H1 (cell line): ENCODE measurements at regions of chr6 and their contacts with region 1.

Region 1: GRCh38 chr6:26156076-26156849 is 69.0 kb downstream of the HFE start:
- DNase-seq: peak; percentile 67 to 95
- H3K4me3 ChIP-seq: peak overlapping the region; percentile 90 to 100 (median 92)
- H3K27ac ChIP-seq: peak overlapping the region; percentile 97
- H3K4me1 ChIP-seq: peaks cover 0 to 3% (median 3%) of the 10 kb centered on the region in 4 experiments; a peak in 5 of 7 replicates
- H3K27me3 ChIP-seq: no peaks in the 10 kb centered on the region
- CTCF ChIP-seq: no peak
- EP300 ChIP-seq: no peak
- POLR2A ChIP-seq: peak; percentile 87 to 97
- RAD21 ChIP-seq: 0 out of 4 replicates have a peak, but pooled peaks have one; percentile 2 to 9

Region 2: DNA sequence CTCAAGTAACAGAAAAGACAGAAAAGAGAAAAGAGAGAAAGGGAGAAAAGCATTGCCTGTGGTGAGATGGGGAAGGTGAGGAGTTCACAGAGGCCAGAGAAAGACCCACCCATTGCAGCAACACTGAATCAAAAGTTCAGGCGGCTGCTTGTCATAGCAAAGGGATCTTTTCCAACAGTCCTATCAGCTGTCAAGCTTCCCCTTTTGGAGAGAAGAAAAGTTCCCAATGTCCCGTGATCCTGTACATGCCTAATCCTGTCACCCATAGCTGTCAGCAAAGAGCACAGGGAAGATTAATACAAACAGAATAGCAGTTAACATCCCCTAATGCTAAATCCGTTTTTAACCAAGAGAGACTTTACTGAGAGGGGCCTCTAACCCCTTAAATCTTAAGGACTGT is 202.5 kb before region 1 on chr6:
- CTCF ChIA-PET with region 1: no interaction called
- POLR2A ChIA-PET with region 1: no interaction called
- DNase-seq: no peak
- H3K4me3 ChIP-seq: no peak overlapping the region
- H3K27ac ChIP-seq: no peak overlapping the region
- H3K4me1 ChIP-seq: peaks cover 0 to 1% (median 0%) of the 10 kb centered on the region in 4 experiments; a peak in 1 of 7 replicates
- H3K27me3 ChIP-seq: no peaks in the 10 kb centered on the region
- CTCF ChIP-seq: no peak
- EP300 ChIP-seq: no peak
- POLR2A ChIP-seq: no peak
- RAD21 ChIP-seq: no peak

Region 3: DNA sequence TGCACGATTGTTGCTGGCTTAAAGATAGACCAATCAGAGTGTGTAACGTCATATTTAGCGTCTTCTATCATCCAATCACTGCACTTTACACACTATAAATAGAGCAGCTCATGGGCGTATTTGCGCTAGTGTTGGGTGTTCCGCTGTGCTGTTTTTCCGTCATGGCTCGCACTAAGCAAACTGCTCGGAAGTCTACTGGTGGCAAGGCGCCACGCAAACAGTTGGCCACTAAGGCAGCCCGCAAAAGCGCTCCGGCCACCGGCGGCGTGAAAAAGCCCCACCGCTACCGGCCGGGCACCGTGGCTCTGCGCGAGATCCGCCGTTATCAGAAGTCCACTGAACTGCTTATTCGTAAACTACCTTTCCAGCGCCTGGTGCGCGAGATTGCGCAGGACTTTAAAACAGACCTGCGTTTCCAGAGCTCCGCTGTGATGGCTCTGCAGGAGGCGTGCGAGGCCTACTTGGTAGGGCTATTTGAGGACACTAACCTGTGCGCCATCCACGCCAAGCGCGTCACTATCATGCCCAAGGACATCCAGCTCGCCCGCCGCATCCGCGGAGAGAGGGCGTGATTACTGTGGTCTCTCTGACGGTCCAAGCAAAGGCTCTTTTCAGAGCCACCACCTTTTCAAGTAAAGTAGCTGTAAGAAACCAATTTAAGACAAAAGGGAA is 135.8 kb before region 1 on chr6:
- CTCF ChIA-PET with region 1: no interaction called
- POLR2A ChIA-PET with region 1: interaction called, 451 read pairs
- DNase-seq: no peak
- H3K4me3 ChIP-seq: peak overlapping the region; percentile 69 to 94 (median 74)
- H3K27ac ChIP-seq: peak overlapping the region; percentile 95
- H3K4me1 ChIP-seq: peaks cover 2 to 14% (median 5%) of the 10 kb centered on the region in 4 experiments; a peak in 4 of 7 replicates
- H3K27me3 ChIP-seq: no peaks in the 10 kb centered on the region
- CTCF ChIP-seq: no peak
- EP300 ChIP-seq: no peak
- POLR2A ChIP-seq: peak; percentile 100
- RAD21 ChIP-seq: no peak; a peak in 1 of 4 replicates

Region 4: GRCh38 chr6:26115226-26115625 is 41.0 kb before region 1 on chr6:
- CTCF ChIA-PET with region 1: no interaction called
- POLR2A ChIA-PET with region 1: interaction called, 36 read pairs
- DNase-seq: no peak
- H3K4me3 ChIP-seq: no peak overlapping the region
- H3K27ac ChIP-seq: no peak overlapping the region
- H3K4me1 ChIP-seq: peaks cover 0 to 2% (median 0%) of the 10 kb centered on the region in 4 experiments; a peak in 2 of 7 replicates
- H3K27me3 ChIP-seq: no peaks in the 10 kb centered on the region
- CTCF ChIP-seq: no peak
- EP300 ChIP-seq: no peak
- POLR2A ChIP-seq: no peak
- RAD21 ChIP-seq: no peak

Region 5: DNA sequence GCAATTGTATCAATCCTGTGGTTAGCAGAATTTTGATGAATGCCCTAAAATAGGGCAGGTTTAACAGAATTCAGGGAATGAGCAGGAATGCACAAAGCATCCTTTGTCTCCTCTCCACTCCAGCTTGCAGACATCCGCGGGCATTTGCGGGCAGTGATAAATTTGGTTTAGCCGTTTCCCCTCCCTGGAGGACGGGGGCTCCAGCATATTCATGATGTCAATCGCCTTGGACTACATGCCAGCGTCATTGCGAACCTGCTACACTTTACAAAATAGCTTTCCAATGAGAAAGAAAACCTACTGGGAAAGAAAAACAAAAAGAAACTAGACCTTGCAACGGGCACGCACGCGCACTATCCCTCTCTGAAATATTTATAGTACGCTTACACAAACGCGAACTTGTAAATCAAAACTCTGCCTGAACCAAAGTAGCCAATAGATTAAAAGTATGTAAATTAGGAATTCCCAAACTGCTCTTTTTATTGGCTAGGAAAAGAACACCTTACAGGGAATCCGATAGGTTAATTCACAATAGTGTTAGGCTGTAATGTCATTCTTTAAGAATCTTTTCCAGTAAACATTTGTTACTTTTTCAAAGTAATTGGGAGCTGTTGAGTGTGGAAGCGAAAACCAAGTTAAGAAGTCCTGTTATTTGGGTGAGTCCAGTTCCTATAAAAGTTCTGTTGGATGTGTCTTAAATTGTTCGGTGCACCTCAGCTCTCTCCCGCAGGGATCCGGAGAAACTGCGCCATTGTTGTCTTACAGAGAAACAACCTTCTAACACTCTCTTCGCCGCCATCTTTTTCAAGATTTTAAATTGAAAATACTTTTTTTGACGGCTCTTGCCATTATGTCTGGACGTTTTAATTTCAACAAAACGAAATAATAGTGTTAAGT is 67.6 kb after region 1 on chr6:
- CTCF ChIA-PET with region 1: interaction called, 3 read pairs
- POLR2A ChIA-PET with region 1: interaction called, 2,060 read pairs
- DNase-seq: no peak
- H3K4me3 ChIP-seq: peak overlapping the region; percentile 61 to 94 (median 76)
- H3K27ac ChIP-seq: peak overlapping the region; percentile 91
- H3K4me1 ChIP-seq: peaks cover 0 to 7% (median 3%) of the 10 kb centered on the region in 4 experiments; a peak in 5 of 7 replicates
- H3K27me3 ChIP-seq: no peaks in the 10 kb centered on the region
- CTCF ChIP-seq: no peak
- EP300 ChIP-seq: no peak
- POLR2A ChIP-seq: peak; percentile 48 to 76; a peak in 2 of 3 replicates
- RAD21 ChIP-seq: no peak

Region 6: GRCh38 chr6:26270903-26271667 is 114.8 kb after region 1 on chr6:
- CTCF ChIA-PET with region 1: no interaction called
- POLR2A ChIA-PET with region 1: interaction called, 225 read pairs
- DNase-seq: peak in 1 of 2 experiments; percentile 85
- H3K4me3 ChIP-seq: peak overlapping the region; percentile 73 to 97 (median 88)
- H3K27ac ChIP-seq: peak overlapping the region; percentile 93
- H3K4me1 ChIP-seq: peaks cover 0 to 10% (median 4%) of the 10 kb centered on the region in 4 experiments; a peak in 4 of 7 replicates
- H3K27me3 ChIP-seq: no peaks in the 10 kb centered on the region
- CTCF ChIP-seq: no peak
- EP300 ChIP-seq: no peak
- POLR2A ChIP-seq: peak; percentile 94 to 100
- RAD21 ChIP-seq: no peak

Region 7: DNA sequence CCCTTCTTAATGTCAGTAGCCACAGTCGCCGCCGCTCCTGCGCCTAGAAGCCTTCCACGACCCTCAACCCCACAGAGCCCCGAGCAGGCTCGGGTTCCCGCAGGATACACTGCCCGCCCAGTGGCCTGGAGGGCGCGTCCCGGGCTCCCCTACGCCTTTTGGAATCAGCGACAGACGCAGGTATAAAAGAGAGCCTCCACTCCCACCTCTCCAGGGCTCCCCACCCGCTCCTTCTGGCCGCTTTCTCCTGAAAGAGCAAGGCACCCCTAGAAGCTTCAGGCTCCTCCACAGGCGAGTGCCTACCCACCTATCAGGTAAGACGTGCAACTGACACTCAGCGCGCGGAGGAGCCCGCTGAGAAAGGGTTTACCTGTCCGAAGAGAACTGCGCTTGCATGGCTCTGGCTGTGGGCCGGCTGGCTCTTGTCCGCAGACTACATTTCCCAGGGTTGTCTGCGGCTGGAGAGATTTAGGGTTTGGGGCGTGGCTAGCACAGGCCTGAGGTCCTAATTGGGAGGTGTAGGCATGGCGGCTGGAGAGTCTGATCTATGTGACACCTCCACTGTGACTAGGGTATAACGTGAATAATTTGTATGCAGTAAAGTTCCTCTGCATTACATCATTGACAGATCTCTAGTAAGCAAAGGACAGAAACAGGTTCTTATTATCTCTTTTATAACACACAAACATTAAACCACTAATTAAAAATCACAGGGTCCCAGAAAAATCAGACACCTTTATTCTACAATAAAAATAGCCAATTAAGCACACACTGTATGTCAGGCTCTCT is 1218.8 kb after region 1 on chr6:
- CTCF ChIA-PET with region 1: no interaction called
- POLR2A ChIA-PET with region 1: no interaction called
- DNase-seq: peak; percentile 66 to 85
- H3K4me3 ChIP-seq: peak overlapping the region; percentile 77 to 94 (median 83)
- H3K27ac ChIP-seq: no peak overlapping the region
- H3K4me1 ChIP-seq: peaks cover 0 to 8% (median 5%) of the 10 kb centered on the region in 4 experiments; a peak in 3 of 7 replicates
- H3K27me3 ChIP-seq: no peaks in the 10 kb centered on the region
- CTCF ChIP-seq: no peak
- EP300 ChIP-seq: no peak
- POLR2A ChIP-seq: peak in 1 of 2 experiments; percentile 40; a peak in 1 of 3 replicates
- RAD21 ChIP-seq: no peak

Region 8: DNA sequence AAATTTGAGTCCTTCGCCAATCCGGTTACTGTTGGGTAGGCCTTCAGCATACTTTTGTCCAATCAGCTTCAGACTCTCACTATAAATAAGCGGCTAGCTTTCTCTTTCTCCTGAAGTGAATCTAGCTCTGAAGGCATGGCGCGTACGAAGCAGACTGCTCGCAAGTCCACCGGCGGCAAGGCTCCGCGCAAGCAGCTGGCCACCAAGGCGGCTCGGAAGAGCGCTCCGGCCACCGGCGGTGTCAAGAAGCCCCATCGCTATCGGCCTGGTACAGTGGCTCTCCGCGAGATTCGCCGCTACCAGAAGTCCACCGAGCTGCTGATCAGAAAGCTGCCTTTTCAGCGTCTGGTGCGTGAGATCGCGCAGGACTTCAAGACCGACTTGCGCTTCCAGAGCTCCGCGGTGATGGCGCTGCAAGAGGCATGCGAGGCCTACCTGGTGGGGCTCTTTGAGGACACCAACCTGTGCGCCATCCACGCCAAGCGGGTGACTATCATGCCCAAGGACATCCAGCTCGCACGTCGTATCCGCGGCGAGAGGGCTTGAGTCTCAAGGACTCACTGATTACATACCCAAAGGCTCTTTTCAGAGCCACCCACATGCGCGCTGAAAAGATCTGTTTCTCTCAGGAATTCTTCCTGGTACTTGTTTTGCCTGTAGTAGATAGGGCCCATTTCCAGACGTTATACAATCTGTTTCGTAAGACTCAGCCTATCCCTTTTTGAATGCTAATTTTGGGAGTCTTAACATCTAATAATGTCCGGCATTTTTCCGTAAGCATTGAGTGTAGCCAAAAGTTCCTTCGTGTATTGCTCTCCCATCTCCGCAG is 1653.9 kb after region 1 on chr6:
- CTCF ChIA-PET with region 1: no interaction called
- POLR2A ChIA-PET with region 1: interaction called, 87 read pairs
- DNase-seq: peak in 1 of 2 experiments; percentile 78
- H3K4me3 ChIP-seq: peak overlapping the region; percentile 78 to 96 (median 89)
- H3K27ac ChIP-seq: peak overlapping the region; percentile 84
- H3K4me1 ChIP-seq: peaks cover 0 to 6% (median 3%) of the 10 kb centered on the region in 4 experiments; a peak in 4 of 7 replicates
- H3K27me3 ChIP-seq: no peaks in the 10 kb centered on the region
- CTCF ChIP-seq: peak in 1 of 3 experiments; percentile 6; a peak in 1 of 4 replicates
- EP300 ChIP-seq: no peak
- POLR2A ChIP-seq: peak; percentile 98 to 100
- RAD21 ChIP-seq: no peak

Region 9: GRCh38 chr6:27893059-27893835 is 1737.0 kb after region 1 on chr6:
- CTCF ChIA-PET with region 1: no interaction called
- POLR2A ChIA-PET with region 1: interaction called, 34 read pairs
- DNase-seq: peak; percentile 88 to 96
- H3K4me3 ChIP-seq: peak overlapping the region; percentile 94 to 99 (median 97)
- H3K27ac ChIP-seq: peak overlapping the region; percentile 95
- H3K4me1 ChIP-seq: peaks cover 3 to 9% (median 3%) of the 10 kb centered on the region in 4 experiments; a peak in 5 of 7 replicates
- H3K27me3 ChIP-seq: no peaks in the 10 kb centered on the region
- CTCF ChIP-seq: no peak
- EP300 ChIP-seq: no peak
- POLR2A ChIP-seq: peak; percentile 99 to 100
- RAD21 ChIP-seq: no peak